RWPE1 (cell line): ENCODE measurements at regions of chr9 and their contacts with region 1.

Region 1: GRCh38 chr9:105510024-105510423 is 47.9 kb upstream of the FKTN start:
- DNase-seq: peak; percentile 32
- H3K27ac ChIP-seq: no peak overlapping the region
- CTCF ChIP-seq: no peak

Region 2: GRCh38 chr9:105438141-105438806 is 71.8 kb before region 1 on chr9:
- CTCF ChIA-PET with region 1: interaction called, 10 read pairs
- POLR2A ChIA-PET with region 1: no interaction called
- DNase-seq: no peak
- H3K27ac ChIP-seq: no peak overlapping the region
- CTCF ChIP-seq: no peak

Region 3: DNA sequence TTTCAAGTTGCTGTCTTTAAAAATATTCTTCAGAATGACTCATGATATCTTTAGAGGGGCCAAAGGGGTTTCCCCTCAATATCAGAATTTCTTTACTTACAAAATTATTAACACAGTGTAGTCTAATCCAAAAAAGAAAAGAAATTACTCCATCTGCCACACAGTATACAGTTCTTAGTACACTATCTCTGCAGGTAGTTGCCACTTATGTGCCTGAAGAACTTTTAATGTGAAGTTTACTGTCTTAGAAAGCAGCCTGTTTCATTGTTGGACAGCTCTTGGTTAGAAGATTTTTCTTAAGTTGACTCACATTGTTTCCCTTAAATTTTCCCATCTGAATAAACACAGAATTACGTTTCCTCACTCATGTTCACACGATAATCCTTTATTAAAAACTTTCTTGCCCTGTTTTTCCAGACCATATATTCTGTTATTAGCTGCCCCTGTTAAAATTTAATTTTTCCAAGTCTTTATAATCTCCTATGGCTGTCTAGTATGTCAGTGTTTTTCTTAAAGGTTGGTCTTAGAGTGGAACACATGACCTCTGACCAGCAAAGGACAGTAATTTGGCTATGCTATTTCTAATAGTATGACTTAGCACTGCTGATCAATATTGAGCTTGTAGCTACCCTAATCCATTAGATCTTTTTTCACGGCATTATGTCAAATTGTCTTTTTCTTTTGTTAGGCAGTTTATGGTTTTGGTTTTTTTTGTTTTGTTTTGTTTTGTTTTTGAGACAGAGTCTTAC is 26.1 kb after region 1 on chr9:
- CTCF ChIA-PET with region 1: no interaction called
- POLR2A ChIA-PET with region 1: no interaction called
- DNase-seq: no peak
- H3K27ac ChIP-seq: no peak overlapping the region
- CTCF ChIP-seq: no peak